Activated T-helper 2 cell treated with anti-CD3 and anti-CD28 coated beads, Interferon-gamma antibody, Interleukin-2, Interleukin-4, amounts not matched to agents 10 μg/mL and 5 μg/mL and 100 μg/mL, durations not matched to agents 14 hours and 24 hours and 36 hours (primary cell): ENCODE measurements at regions of chr9 and their contacts with region 1.

Region 1: DNA sequence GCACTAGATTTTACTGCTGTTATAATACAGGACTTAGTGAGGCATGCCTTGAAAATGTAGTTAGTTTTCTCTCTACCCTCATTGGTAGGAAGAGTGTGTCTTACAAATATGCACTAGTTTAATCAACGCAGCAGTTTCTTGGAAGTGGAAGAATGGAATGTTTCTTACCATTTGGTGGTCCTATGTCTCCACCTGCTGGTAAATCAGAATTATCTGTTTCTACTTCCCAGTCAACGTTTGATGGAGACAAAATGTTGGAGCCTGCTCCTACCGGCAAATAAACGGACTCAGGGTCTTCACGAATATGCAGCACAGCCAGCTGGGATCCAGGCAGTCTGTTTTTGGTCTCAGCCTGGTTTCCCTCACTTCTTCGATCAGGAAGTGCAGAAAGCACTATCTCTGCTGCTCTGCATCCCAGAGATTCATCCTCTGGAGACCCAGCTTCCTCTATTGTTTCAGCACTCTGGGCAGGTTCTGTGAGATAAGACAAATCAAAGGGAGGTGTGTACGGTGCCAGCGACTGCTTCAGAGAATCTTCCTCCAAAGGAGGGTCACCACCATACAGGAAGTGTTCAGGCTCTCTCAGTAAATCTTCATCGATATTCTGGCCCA is 59.5 kb upstream of the PCA3 start:
- DNase-seq: no peak
- H3K4me3 Mint-ChIP-seq: no peak overlapping the region
- H3K27ac Mint-ChIP-seq: no peak overlapping the region
- H3K4me1 Mint-ChIP-seq: peaks cover 7% of the 10 kb centered on the region
- H3K27me3 Mint-ChIP-seq: peaks cover 26% of the 10 kb centered on the region

Region 2: DNA sequence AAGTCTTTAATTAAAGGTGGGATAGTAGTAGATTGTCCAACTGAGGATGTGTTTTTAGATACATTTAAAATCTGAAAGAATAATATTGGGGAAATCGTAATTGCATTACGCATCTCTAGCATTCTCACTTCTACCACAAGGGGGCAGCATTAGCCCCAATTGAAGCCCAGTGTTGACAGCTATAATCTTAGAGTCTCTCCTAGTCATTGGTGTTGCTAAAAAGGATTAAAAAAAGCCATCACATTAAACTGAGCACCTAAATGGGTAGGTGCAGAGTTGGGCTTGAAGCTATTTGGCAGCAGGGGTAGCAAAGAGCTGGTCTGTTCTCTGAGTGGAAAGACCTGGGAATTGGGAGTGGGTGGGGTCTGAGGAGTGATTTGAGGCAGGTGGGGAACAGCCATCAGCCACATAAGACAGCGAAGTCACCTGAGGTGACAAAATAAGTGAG is 1439.2 kb before region 1 on chr9:
- intact Hi-C with region 1: loop called (anchors 5 kb)
- DNase-seq: peak; percentile 12
- H3K4me3 Mint-ChIP-seq: no peak overlapping the region
- H3K27ac Mint-ChIP-seq: no peak overlapping the region
- H3K4me1 Mint-ChIP-seq: no peaks in the 10 kb centered on the region
- H3K27me3 Mint-ChIP-seq: no peaks in the 10 kb centered on the region

Region 3: DNA sequence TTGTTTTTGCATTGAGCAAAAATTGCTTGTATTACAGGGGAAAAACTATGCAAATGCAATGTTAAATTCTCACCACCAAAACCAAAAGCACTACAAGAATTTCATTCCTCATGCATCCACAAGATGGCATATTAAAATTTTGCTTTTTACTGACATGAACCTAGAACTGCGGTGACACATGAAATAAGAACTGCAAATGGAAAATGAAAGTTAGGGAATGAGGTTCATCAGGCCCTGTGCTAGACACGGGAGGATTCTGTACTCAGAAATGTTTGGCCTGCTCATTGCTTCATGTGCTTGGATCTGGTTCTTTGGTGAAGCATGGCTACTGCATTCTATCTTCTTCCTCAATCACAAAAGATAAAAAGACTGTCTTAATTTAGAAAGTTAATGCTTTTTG is 301.3 kb before region 1 on chr9:
- intact Hi-C with region 1: loop called (anchors 2 kb)
- DNase-seq: peak; percentile 15
- H3K4me3 Mint-ChIP-seq: peak overlapping the region; percentile 58
- H3K27ac Mint-ChIP-seq: peak overlapping the region; percentile 76
- H3K4me1 Mint-ChIP-seq: peaks cover 22% of the 10 kb centered on the region
- H3K27me3 Mint-ChIP-seq: no peaks in the 10 kb centered on the region

Region 4: GRCh38 chr9:76451234-76451633 is 253.5 kb before region 1 on chr9:
- intact Hi-C with region 1: loop called (anchors 1 kb)
- DNase-seq: no peak
- H3K4me3 Mint-ChIP-seq: no peak overlapping the region
- H3K27ac Mint-ChIP-seq: no peak overlapping the region
- H3K4me1 Mint-ChIP-seq: peaks cover 37% of the 10 kb centered on the region
- H3K27me3 Mint-ChIP-seq: no peaks in the 10 kb centered on the region

Region 5: DNA sequence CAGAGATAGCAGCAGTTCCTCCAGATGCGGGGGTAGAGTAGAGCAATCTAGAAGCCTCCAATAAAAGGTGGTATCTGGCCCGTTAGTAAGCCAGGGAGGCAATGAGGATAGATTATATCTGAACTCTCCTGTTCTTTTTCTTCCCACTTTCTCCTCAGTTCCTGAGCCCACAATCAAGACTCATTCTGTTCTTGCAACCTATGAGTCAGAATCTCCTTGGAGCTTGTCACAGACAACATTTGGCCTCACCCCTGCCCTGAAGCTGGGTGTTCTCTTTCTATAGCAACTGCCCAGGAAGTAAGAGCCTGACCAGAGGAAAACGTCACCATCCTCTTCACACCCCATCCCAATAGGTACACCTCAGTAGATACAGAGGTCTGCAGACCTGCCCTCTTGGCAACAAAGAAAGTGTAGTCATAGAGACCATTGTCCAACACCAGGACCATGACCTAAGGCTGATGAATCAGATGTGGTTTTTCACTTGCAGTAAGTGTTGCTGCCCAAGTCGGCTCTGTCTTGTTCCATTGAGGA is 16.8 kb before region 1 on chr9:
- intact Hi-C with region 1: loop called (anchors 2 kb)
- DNase-seq: no peak
- H3K4me3 Mint-ChIP-seq: no peak overlapping the region
- H3K27ac Mint-ChIP-seq: peak overlapping the region; percentile 23
- H3K4me1 Mint-ChIP-seq: peaks cover 28% of the 10 kb centered on the region
- H3K27me3 Mint-ChIP-seq: peaks cover 31% of the 10 kb centered on the region